ENCODE measurements at regions of chr6 and their contacts with region 1.

Region 1: DNA sequence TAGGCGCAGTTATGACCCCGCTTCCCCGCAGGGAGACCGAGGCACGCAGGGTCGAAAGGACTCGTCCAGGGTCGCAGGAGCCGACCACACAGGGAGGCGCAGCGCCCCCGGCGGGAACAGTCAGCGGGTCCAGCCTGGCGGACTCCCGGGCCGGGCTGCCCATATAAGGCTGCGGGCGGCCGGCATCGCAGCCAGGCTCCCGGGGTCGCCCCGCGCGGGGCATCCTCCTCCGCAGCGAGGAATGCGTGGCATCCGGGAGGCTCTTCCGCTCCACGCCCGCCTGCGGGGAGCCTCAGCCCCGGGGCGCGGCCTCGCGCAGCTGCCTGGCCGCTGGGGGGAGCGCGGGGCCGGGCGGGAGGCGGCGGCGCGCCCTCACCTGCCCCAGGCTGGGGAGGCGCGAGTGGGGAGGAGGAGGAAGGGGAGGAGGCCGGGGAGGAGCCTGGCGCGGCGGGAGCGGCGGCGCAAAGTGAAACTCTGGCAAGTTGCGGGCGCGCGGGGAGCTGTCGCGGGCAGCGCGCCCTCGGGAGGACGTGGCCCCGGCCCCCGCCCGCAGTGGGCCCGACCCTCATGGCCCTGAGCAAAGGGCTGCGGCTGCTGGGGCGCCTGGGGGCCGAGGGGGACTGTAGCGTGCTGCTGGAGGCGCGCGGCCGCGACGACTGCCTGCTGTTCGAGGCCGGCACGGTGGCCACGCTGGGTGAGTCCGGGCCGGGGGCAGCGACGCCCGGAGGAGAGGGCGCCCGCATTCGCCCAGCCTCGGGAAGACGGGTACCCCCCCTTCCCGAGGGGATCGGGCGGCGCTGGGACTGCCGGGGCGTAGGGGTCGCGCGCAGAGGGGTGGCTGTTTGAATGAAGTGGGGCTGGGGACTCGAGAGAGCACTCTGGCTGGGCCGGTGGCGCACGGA is at the start of gene SYNJ2:
- DNase-seq: peak; percentile 66 to 90 (median 82)
- ATAC-seq: peak; percentile 91
- H3K4me3 ChIP-seq: peak within 1 kb of the TSS; percentile 69 to 87
- H3K4me3 Mint-ChIP-seq: peak within 1 kb of the TSS; percentile 89
- H3K27ac ChIP-seq: peak within 1 kb of the TSS; percentile 43 to 55
- H3K27ac Mint-ChIP-seq: peak within 1 kb of the TSS; percentile 55
- H3K4me1 ChIP-seq: peaks cover 49% of the 10 kb centered on the region
- H3K4me1 Mint-ChIP-seq: peaks cover 47% of the 10 kb centered on the region
- H3K27me3 ChIP-seq: no peaks in the 10 kb centered on the region
- H3K27me3 Mint-ChIP-seq: no peaks in the 10 kb centered on the region
- CTCF ChIP-seq: peak; percentile 38
- total RNA-seq, gene SYNJ2: 28.4 to 29.5 TPM

Region 2: DNA sequence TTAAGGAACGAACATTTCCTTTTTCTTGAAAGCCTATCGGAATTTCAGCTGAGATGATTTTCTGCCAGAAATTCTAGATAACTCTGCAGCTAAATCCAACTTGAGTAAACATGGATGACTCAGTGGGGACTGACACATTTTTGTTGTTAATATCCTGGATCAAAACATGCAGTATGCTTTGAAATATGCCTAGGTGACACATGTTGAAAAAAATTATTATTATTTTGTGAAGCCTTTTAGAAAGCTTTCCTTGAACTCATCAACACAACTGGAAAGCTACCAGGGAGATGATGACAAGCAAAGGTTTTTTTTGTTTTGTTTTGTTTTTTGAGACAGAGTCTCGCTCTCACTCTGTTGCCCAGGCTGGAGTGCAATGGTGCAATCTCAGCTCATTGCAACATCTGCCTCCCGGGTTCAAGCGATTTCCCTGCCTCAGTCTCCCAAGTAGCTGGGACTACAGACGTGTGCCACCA is 298.7 kb before region 1 on chr6:
- CTCF ChIA-PET with region 1: no interaction called
- POLR2A ChIA-PET with region 1: no interaction called
- intact Hi-C with region 1: no loop called
- DNase-seq: no peak
- ATAC-seq: no peak
- H3K4me3 ChIP-seq: no peak overlapping the region
- H3K4me3 Mint-ChIP-seq: no peak overlapping the region
- H3K27ac ChIP-seq: no peak overlapping the region
- H3K27ac Mint-ChIP-seq: no peak overlapping the region
- H3K4me1 ChIP-seq: no peaks in the 10 kb centered on the region
- H3K4me1 Mint-ChIP-seq: no peaks in the 10 kb centered on the region
- H3K27me3 ChIP-seq: no peaks in the 10 kb centered on the region
- H3K27me3 Mint-ChIP-seq: no peaks in the 10 kb centered on the region
- CTCF ChIP-seq: no peak

Region 3: GRCh38 chr6:158009114-158009891 is 27.7 kb after region 1 on chr6:
- CTCF ChIA-PET with region 1: interaction called, 3 read pairs
- POLR2A ChIA-PET with region 1: no interaction called
- intact Hi-C with region 1: loop called in 1 of 2 experiments (anchors 2 kb)
- DNase-seq: peak in 4 of 9 experiments; percentile 17 to 32 (median 30)
- ATAC-seq: peak; percentile 49
- H3K4me3 ChIP-seq: peak overlapping the region; percentile 23 to 42
- H3K4me3 Mint-ChIP-seq: peak overlapping the region; percentile 82
- H3K27ac ChIP-seq: peak overlapping the region in 1 of 2 experiments; percentile 14
- H3K27ac Mint-ChIP-seq: peak overlapping the region; percentile 71
- H3K4me1 ChIP-seq: peaks cover 27% of the 10 kb centered on the region
- H3K4me1 Mint-ChIP-seq: peaks cover 72% of the 10 kb centered on the region
- H3K27me3 ChIP-seq: no peaks in the 10 kb centered on the region
- H3K27me3 Mint-ChIP-seq: no peaks in the 10 kb centered on the region
- CTCF ChIP-seq: no peak

Region 4: GRCh38 chr6:158170656-158171081 is 189.0 kb after region 1 on chr6:
- CTCF ChIA-PET with region 1: no interaction called
- POLR2A ChIA-PET with region 1: no interaction called
- intact Hi-C with region 1: no loop called
- DNase-seq: no peak
- ATAC-seq: no peak
- H3K4me3 ChIP-seq: no peak overlapping the region
- H3K4me3 Mint-ChIP-seq: no peak overlapping the region
- H3K27ac ChIP-seq: no peak overlapping the region
- H3K27ac Mint-ChIP-seq: no peak overlapping the region
- H3K4me1 ChIP-seq: peaks cover 7% of the 10 kb centered on the region
- H3K4me1 Mint-ChIP-seq: peaks cover 37% of the 10 kb centered on the region
- H3K27me3 ChIP-seq: no peaks in the 10 kb centered on the region
- H3K27me3 Mint-ChIP-seq: no peaks in the 10 kb centered on the region
- CTCF ChIP-seq: no peak

Measured in CD8-positive, alpha-beta T cell (primary cell).